ENCODE measurements at regions of chr5 and their contacts with region 1.

Region 1: DNA sequence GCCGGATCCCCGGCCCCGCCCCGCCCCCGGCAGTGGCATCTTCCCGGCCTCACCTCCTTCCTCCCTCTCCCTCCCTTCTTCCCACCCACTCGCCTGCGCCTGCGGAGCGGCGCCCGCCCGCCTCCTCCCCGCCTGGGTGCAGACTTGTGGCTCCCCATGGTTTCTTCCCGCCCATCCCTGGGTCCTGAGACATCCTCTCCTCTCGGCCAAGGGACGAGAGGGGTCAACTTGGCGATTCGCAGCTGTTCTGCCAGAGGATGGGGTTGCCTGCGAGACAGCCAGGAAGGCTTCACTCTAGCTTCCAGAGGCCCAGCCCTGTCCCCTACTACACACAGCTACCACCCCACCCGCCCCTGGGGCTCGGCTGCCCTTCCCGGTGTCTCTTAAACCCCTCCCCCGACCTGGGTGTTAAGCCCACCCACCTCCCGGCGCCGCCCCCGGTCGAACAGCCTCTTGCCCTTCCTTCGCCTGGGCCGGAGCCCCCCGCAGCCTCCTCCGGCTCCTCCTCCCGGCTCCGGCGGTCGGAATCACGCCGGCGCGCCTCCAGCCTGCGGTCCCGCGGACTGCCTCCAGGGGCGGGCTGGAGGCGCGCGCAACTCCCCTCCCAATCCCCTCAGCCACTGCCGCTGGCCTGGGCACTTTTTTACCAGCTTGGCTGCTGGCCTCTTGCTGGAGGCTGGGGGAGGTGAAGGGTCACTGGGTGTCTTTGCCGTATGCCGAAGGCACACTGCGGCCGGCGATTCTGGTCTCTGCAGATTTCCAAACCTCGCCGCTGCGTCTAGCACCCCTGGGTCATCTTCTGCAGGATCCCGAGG is 1.9 kb downstream of the JADE2 start:
- DNase-seq: peak; percentile 58 to 73 (median 62)
- H3K4me3 ChIP-seq: peak overlapping the region; percentile 77 to 80
- H3K4me3 Mint-ChIP-seq: peak overlapping the region; percentile 94 to 98 (median 97)
- H3K27ac ChIP-seq: peak overlapping the region; percentile 96
- H3K27ac Mint-ChIP-seq: peak overlapping the region; percentile 82 to 99 (median 92)
- H3K4me1 ChIP-seq: peaks cover 60% of the 10 kb centered on the region
- H3K4me1 Mint-ChIP-seq: peaks cover 40 to 80% (median 49%) of the 10 kb centered on the region in 4 donors
- H3K27me3 ChIP-seq: no peaks in the 10 kb centered on the region
- H3K27me3 Mint-ChIP-seq: peaks cover 0 to 2% of the 10 kb centered on the region in 2 donors

Region 2: GRCh38 chr5:134304311-134304710 is 223.0 kb before region 1 on chr5:
- CTCF ChIA-PET with region 1: interaction called, 4 read pairs
- POLR2A ChIA-PET with region 1: no interaction called
- intact Hi-C with region 1: loop called (anchors 5 kb)
- DNase-seq: no peak
- H3K4me3 ChIP-seq: no peak overlapping the region
- H3K4me3 Mint-ChIP-seq: no peak overlapping the region
- H3K27ac ChIP-seq: no peak overlapping the region
- H3K27ac Mint-ChIP-seq: no peak overlapping the region
- H3K4me1 ChIP-seq: no peaks in the 10 kb centered on the region
- H3K4me1 Mint-ChIP-seq: no peaks in the 10 kb centered on the region
- H3K27me3 ChIP-seq: no peaks in the 10 kb centered on the region
- H3K27me3 Mint-ChIP-seq: no peaks in the 10 kb centered on the region

Region 3: GRCh38 chr5:134411546-134412266 is 115.6 kb before region 1 on chr5 and contains the start of gene CDKN2AIPNL:
- CTCF ChIA-PET with region 1: interaction called, 82 read pairs
- POLR2A ChIA-PET with region 1: interaction called, 152 read pairs
- intact Hi-C with region 1: loop called (anchors 1 kb)
- DNase-seq: peak; percentile 87 to 91 (median 88)
- H3K4me3 ChIP-seq: peak within 1 kb of the TSS; percentile 79 to 93
- H3K4me3 Mint-ChIP-seq: peak within 1 kb of the TSS; percentile 89 to 94 (median 91)
- H3K27ac ChIP-seq: peak within 1 kb of the TSS; percentile 70
- H3K27ac Mint-ChIP-seq: peak within 1 kb of the TSS; percentile 84 to 95 (median 91)
- H3K4me1 ChIP-seq: peaks cover 30% of the 10 kb centered on the region
- H3K4me1 Mint-ChIP-seq: peaks cover 18 to 47% (median 33%) of the 10 kb centered on the region in 4 donors
- H3K27me3 ChIP-seq: no peaks in the 10 kb centered on the region
- H3K27me3 Mint-ChIP-seq: no peaks in the 10 kb centered on the region
- total RNA-seq, gene CDKN2AIPNL: 14.7 to 15.1 TPM

Region 4: GRCh38 chr5:134465816-134466240 is 61.5 kb before region 1 on chr5:
- CTCF ChIA-PET with region 1: interaction called, 7 read pairs
- POLR2A ChIA-PET with region 1: interaction called, 88 read pairs
- intact Hi-C with region 1: loop called (anchors 1 kb)
- DNase-seq: peak; percentile 20 to 49 (median 30)
- H3K4me3 ChIP-seq: peak overlapping the region; percentile 61
- H3K4me3 Mint-ChIP-seq: peak overlapping the region; percentile 82 to 90 (median 88)
- H3K27ac ChIP-seq: peak overlapping the region; percentile 42
- H3K27ac Mint-ChIP-seq: peak overlapping the region; percentile 47 to 90 (median 85)
- H3K4me1 ChIP-seq: peaks cover 21% of the 10 kb centered on the region
- H3K4me1 Mint-ChIP-seq: peaks cover 2 to 26% (median 12%) of the 10 kb centered on the region in 4 donors
- H3K27me3 ChIP-seq: no peaks in the 10 kb centered on the region
- H3K27me3 Mint-ChIP-seq: no peaks in the 10 kb centered on the region

Region 5: DNA sequence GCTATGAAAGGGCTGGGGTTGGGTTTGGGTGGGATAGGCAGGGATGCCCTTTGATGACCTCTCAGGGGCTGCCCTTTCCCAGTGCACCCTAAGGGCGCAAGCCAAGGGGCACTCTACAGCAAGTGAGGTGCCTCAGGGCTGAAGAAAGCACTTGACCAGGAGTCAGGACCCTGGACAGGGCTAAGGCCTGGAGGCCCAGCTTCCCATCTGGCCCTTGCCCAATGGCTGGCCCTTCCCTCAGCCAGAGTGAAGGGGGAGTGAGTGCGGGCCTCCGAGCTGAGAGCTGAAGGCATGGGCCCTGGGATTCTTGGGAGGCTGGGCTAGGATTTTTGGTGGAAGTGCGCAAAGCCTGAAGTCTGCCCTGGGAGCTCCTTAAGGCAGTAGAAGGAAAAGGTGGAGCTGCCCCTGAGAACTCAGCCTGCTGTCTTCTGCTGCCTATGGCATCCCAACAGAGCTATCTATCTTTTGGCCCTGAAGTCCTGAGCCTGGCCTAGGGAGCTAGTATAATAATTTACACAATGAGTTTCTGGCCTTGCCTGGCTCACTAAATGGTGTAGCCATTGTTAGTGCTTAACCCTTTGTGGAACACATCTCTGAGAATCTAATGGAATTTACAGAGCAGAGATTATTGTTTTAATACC is 14.5 kb after region 1 on chr5:
- CTCF ChIA-PET with region 1: interaction called, 13 read pairs
- POLR2A ChIA-PET with region 1: interaction called, 81 read pairs
- intact Hi-C with region 1: loop called (anchors 2 kb)
- DNase-seq: peak in 2 of 5 donors; percentile 17 to 27
- H3K4me3 ChIP-seq: no peak overlapping the region
- H3K4me3 Mint-ChIP-seq: peak overlapping the region in 1 of 8 donors; percentile 26
- H3K27ac ChIP-seq: no peak overlapping the region
- H3K27ac Mint-ChIP-seq: peak overlapping the region in 6 of 7 donors; percentile 10 to 65 (median 40)
- H3K4me1 ChIP-seq: peaks cover 63% of the 10 kb centered on the region
- H3K4me1 Mint-ChIP-seq: peaks cover 26 to 74% (median 46%) of the 10 kb centered on the region in 4 donors
- H3K27me3 ChIP-seq: no peaks in the 10 kb centered on the region
- H3K27me3 Mint-ChIP-seq: no peaks in the 10 kb centered on the region

Region 6: DNA sequence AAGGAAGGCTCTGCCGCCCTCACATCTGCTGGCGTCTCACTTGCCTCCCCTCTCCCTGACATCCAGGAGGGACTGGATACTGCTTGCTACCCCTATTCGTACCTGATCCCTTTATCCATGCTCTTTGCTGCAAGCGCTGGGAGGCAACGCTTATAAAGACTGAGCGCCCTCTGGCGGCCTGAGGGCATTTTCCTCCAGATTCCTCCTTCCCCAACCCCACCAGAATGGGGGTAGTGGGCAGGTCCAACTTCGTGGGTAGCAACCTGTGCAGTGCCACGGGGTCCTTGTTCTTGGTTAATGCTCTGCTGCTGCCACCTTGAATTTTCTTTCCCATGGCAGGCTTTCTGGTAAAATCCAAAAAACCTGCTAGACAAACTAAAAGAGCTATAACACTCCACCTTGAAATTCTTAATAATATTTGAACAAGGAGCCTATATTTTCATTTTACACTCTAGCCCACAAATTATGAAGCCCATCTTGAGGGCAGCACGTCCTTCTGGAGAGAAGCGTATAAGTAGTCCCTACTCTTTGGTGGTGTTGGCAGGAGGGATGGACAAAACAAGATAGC is 50.5 kb after region 1 on chr5:
- CTCF ChIA-PET with region 1: interaction called, 8 read pairs
- POLR2A ChIA-PET with region 1: interaction called, 13 read pairs
- intact Hi-C with region 1: loop called (anchors 1 kb)
- DNase-seq: peak; percentile 65 to 70 (median 69)
- H3K4me3 ChIP-seq: no peak overlapping the region
- H3K4me3 Mint-ChIP-seq: no peak overlapping the region
- H3K27ac ChIP-seq: no peak overlapping the region
- H3K27ac Mint-ChIP-seq: peak overlapping the region; percentile 28 to 86 (median 78)
- H3K4me1 ChIP-seq: no peaks in the 10 kb centered on the region
- H3K4me1 Mint-ChIP-seq: peaks cover 3 to 17% (median 14%) of the 10 kb centered on the region in 4 donors
- H3K27me3 ChIP-seq: no peaks in the 10 kb centered on the region
- H3K27me3 Mint-ChIP-seq: no peaks in the 10 kb centered on the region

Region 7: DNA sequence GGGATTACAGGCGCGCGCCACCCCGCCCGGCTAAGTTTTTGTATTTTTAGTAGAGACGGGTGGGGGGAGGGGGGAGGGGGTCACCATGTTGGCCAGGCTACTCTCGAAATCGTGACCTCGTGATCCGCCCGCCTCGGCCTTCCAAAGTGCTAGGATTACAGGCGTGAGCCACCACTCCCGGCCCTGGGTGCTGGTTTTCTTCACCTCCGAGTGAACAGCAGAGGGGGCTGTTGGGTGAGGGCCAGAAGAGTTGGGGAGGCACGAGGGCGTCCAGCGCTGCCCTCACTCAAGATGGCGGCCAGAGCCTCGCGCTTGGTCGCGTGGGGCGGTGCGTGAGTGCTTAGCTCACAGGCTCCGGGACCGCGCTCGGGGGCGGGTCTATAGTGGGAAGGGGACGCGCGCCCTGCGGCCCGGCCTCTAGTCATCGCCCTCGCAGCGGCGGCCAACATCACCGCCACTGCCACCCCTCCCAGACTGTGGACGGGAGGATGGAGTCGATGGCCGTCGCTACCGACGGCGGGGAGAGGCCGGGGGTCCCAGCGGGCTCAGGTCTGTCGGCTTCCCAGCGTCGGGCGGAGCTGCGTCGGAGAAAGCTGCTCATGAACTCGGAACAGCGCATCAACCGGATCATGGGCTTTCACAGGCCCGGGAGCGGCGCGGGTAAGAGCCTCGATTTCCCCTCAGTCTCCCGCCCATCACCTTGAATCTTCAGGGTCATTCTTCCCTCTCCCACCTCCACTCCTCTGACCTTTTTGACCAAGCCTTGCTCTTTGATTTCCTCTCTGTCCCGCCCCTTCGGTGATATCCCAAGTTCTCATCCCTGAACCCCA is 211.0 kb after region 1 on chr5 and contains the start of gene CAMLG:
- CTCF ChIA-PET with region 1: no interaction called
- POLR2A ChIA-PET with region 1: interaction called, 6 read pairs
- intact Hi-C with region 1: loop called (anchors 2 kb)
- DNase-seq: peak; percentile 96 to 97 (median 97)
- H3K4me3 ChIP-seq: peak within 1 kb of the TSS; percentile 87 to 97
- H3K4me3 Mint-ChIP-seq: peak within 1 kb of the TSS; percentile 88 to 98 (median 94)
- H3K27ac ChIP-seq: peak within 1 kb of the TSS; percentile 86
- H3K27ac Mint-ChIP-seq: peak within 1 kb of the TSS; percentile 85 to 99 (median 97)
- H3K4me1 ChIP-seq: peaks cover 18% of the 10 kb centered on the region
- H3K4me1 Mint-ChIP-seq: peaks cover 14 to 31% (median 21%) of the 10 kb centered on the region in 4 donors
- H3K27me3 ChIP-seq: no peaks in the 10 kb centered on the region
- H3K27me3 Mint-ChIP-seq: no peaks in the 10 kb centered on the region
- total RNA-seq, gene CAMLG: 26.7 to 33.8 TPM

Measured in CD4-positive, alpha-beta memory T cell (primary cell).